CD4-positive, alpha-beta memory T cell (primary cell): ENCODE measurements at regions of chr21 and their contacts with region 1.

Region 1: GRCh38 chr21:32940079-32941014 is 85.4 kb upstream of the OLIG2 start:
- DNase-seq: peak in 4 of 5 donors; percentile 46 to 55 (median 50)
- H3K4me3 ChIP-seq: no peak overlapping the region
- H3K4me3 Mint-ChIP-seq: peak overlapping the region in 1 of 8 donors; percentile 52
- H3K27ac ChIP-seq: no peak overlapping the region
- H3K27ac Mint-ChIP-seq: no peak overlapping the region
- H3K4me1 ChIP-seq: no peaks in the 10 kb centered on the region
- H3K4me1 Mint-ChIP-seq: peaks cover 0 to 6% (median 0%) of the 10 kb centered on the region in 4 donors
- H3K27me3 ChIP-seq: no peaks in the 10 kb centered on the region
- H3K27me3 Mint-ChIP-seq: peaks cover 2 to 8% of the 10 kb centered on the region in 2 donors

Region 2: DNA sequence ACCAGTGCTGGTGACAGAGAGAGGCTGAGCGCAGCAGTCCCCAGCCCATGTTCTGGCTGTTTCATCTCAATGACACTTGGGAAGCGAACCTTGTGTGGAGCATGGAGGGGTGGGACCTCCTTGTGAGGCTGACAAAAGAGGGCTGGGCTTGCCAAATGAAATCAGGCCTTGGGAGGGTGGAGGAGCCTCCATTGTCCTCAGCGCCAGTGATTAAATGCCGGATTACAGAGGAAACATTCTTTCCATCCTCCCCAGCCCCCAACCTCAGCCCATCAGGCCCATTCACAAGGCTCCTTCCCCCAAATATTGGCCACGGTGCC is 105.5 kb before region 1 on chr21:
- CTCF ChIA-PET with region 1: interaction called, 18 read pairs
- POLR2A ChIA-PET with region 1: no interaction called
- intact Hi-C with region 1: no loop called
- DNase-seq: no peak
- H3K4me3 ChIP-seq: no peak overlapping the region
- H3K4me3 Mint-ChIP-seq: no peak overlapping the region
- H3K27ac ChIP-seq: no peak overlapping the region
- H3K27ac Mint-ChIP-seq: no peak overlapping the region
- H3K4me1 ChIP-seq: no peaks in the 10 kb centered on the region
- H3K4me1 Mint-ChIP-seq: no peaks in the 10 kb centered on the region
- H3K27me3 ChIP-seq: no peaks in the 10 kb centered on the region
- H3K27me3 Mint-ChIP-seq: peaks cover 2 to 3% of the 10 kb centered on the region in 2 donors

Region 3: DNA sequence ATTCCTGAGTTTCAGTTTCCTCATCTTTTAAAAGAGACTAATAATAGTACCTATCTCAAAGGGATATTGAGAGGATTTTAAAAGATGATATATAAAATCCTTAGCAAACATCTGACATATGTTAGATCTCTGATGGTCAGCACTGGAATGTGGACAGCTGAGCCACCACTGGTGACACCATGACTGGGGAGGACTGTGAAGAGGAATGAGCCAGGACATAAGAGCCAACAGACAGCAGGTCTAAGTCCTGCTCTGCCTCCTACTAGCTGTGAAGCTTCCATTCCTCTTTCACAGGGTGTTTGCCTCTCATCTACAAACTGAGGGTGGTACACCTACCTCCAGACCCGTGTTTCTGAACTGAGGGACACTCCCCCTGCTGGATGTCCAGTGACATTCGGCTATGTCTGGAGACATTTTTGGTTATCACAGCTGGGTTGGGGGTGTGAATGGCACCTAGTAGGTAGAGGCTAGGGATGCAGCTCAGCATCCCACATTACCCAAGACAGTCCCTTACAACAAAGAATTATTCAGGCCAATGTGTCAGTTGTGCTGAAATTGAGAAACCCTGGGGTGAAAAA is 23.7 kb before region 1 on chr21:
- CTCF ChIA-PET with region 1: interaction called, 64 read pairs
- POLR2A ChIA-PET with region 1: no interaction called
- intact Hi-C with region 1: no loop called
- DNase-seq: no peak
- H3K4me3 ChIP-seq: no peak overlapping the region
- H3K4me3 Mint-ChIP-seq: no peak overlapping the region
- H3K27ac ChIP-seq: no peak overlapping the region
- H3K27ac Mint-ChIP-seq: peak overlapping the region in 2 of 7 donors; percentile 13 to 33
- H3K4me1 ChIP-seq: peaks cover 32% of the 10 kb centered on the region
- H3K4me1 Mint-ChIP-seq: peaks cover 23 to 46% (median 34%) of the 10 kb centered on the region in 4 donors
- H3K27me3 ChIP-seq: no peaks in the 10 kb centered on the region
- H3K27me3 Mint-ChIP-seq: no peaks in the 10 kb centered on the region

Region 4: GRCh38 chr21:32929633-32930038 is 10.7 kb before region 1 on chr21:
- CTCF ChIA-PET with region 1: interaction called, 64 read pairs
- POLR2A ChIA-PET with region 1: interaction called, 4 read pairs
- intact Hi-C with region 1: no loop called
- DNase-seq: no peak
- H3K4me3 ChIP-seq: no peak overlapping the region
- H3K4me3 Mint-ChIP-seq: peak overlapping the region in 7 of 8 donors; percentile 29 to 70 (median 52)
- H3K27ac ChIP-seq: no peak overlapping the region
- H3K27ac Mint-ChIP-seq: peak overlapping the region in 5 of 7 donors; percentile 6 to 71 (median 49)
- H3K4me1 ChIP-seq: peaks cover 46% of the 10 kb centered on the region
- H3K4me1 Mint-ChIP-seq: peaks cover 21 to 42% (median 30%) of the 10 kb centered on the region in 4 donors
- H3K27me3 ChIP-seq: no peaks in the 10 kb centered on the region
- H3K27me3 Mint-ChIP-seq: no peaks in the 10 kb centered on the region

Region 5: GRCh38 chr21:33374450-33375096 is 434.2 kb after region 1 on chr21:
- CTCF ChIA-PET with region 1: interaction called, 9 read pairs
- POLR2A ChIA-PET with region 1: no interaction called
- intact Hi-C with region 1: loop called (anchors 1 kb)
- DNase-seq: peak in 4 of 5 donors; percentile 52 to 55 (median 54)
- H3K4me3 ChIP-seq: no peak overlapping the region
- H3K4me3 Mint-ChIP-seq: no peak overlapping the region
- H3K27ac ChIP-seq: no peak overlapping the region
- H3K27ac Mint-ChIP-seq: peak overlapping the region in 1 of 7 donors; percentile 51
- H3K4me1 ChIP-seq: peaks cover 13% of the 10 kb centered on the region
- H3K4me1 Mint-ChIP-seq: peaks cover 7 to 21% (median 10%) of the 10 kb centered on the region in 4 donors
- H3K27me3 ChIP-seq: no peaks in the 10 kb centered on the region
- H3K27me3 Mint-ChIP-seq: no peaks in the 10 kb centered on the region